ENCODE measurements at regions of chr7 and their contacts with region 1.

Region 1: DNA sequence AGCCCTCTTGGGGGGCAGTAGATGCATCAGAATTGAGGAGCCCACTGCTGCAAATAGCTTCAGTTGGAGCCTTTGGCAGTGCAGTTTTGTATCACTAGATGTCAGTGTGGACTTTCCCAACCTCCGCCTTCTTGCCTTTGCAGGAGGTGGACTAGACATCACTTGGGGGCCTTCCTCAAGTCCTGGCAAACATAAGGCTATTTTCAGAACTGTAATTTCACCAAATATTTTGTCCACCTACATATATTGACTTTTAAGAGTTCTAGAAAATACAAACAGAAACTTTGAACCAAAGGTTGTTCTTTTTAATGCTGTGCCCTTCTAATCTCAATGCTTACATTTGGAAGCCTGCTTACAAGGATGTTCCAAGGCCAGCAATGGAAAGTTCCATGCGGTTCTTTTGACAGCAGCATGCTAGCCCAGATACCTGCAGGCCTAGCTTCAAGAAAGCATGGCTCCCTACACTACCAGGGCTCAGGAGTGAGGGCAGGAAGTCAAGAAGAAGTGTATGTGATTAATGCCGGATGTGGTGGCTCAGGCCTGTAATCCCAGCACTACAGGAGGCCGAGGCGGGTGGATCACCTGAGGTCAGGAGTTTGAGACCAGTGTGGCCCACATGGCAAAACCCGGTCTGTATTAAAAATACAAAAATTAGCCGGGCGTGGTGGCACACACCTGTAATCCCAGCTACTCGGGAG is 8.0 kb upstream of the ZNRF2 start:
- DNase-seq: peak; percentile 65
- H3K4me3 Mint-ChIP-seq: no peak overlapping the region
- H3K27ac Mint-ChIP-seq: no peak overlapping the region
- H3K4me1 Mint-ChIP-seq: peaks cover 2% of the 10 kb centered on the region
- H3K27me3 Mint-ChIP-seq: peaks cover 4% of the 10 kb centered on the region

Region 2: DNA sequence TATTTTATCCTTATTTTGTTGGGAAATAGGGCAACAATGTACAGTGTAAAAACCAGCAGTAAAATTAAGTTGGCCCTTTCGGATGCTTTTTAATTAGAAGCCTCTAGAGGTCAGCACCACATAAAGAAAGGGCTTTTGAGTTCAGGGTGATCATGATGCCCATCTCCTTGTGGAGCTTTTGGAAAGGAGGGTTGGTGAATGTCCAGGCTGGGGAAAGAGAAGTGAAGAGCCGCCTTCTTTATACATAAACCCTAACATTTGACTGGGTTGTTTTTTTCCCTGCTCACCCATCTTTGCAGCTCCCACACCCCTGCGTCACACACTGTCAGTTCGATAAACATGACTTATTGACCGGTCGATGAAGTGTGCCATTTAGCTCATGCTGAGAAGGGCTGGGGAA is 111.8 kb before region 1 on chr7:
- CTCF ChIA-PET with region 1: interaction called, 12 read pairs
- DNase-seq: no peak
- H3K4me3 Mint-ChIP-seq: no peak overlapping the region
- H3K27ac Mint-ChIP-seq: no peak overlapping the region
- H3K4me1 Mint-ChIP-seq: peaks cover 42% of the 10 kb centered on the region
- H3K27me3 Mint-ChIP-seq: peaks cover 20% of the 10 kb centered on the region